ENCODE measurements at regions of chr16 and their contacts with region 1.

Region 1: GRCh38 chr16:20774703-20775362 is 11.0 kb downstream of the ACSM3 start:
- DNase-seq: peak; percentile 77
- H3K4me3 Mint-ChIP-seq: no peak overlapping the region
- H3K27ac Mint-ChIP-seq: no peak overlapping the region
- H3K4me1 Mint-ChIP-seq: no peaks in the 10 kb centered on the region
- H3K27me3 Mint-ChIP-seq: no peaks in the 10 kb centered on the region

Region 2: GRCh38 chr16:20763461-20764232 is 11.2 kb before region 1 on chr16 and contains the start of gene ACSM3:
- CTCF ChIA-PET with region 1: interaction called, 11 read pairs
- POLR2A ChIA-PET with region 1: no interaction called
- intact Hi-C with region 1: no loop called
- DNase-seq: peak; percentile 76
- H3K4me3 Mint-ChIP-seq: peak within 1 kb of the TSS; percentile 79
- H3K27ac Mint-ChIP-seq: peak within 1 kb of the TSS; percentile 87
- H3K4me1 Mint-ChIP-seq: peaks cover 20% of the 10 kb centered on the region
- H3K27me3 Mint-ChIP-seq: no peaks in the 10 kb centered on the region
- total RNA-seq, gene ACSM3: 13.8 to 17.4 TPM

Region 3: GRCh38 chr16:21116148-21116693 is 341.4 kb after region 1 on chr16:
- CTCF ChIA-PET with region 1: no interaction called
- POLR2A ChIA-PET with region 1: no interaction called
- intact Hi-C with region 1: no loop called
- DNase-seq: peak; percentile 20
- H3K4me3 Mint-ChIP-seq: peak overlapping the region; percentile 53
- H3K27ac Mint-ChIP-seq: no peak overlapping the region
- H3K4me1 Mint-ChIP-seq: peaks cover 7% of the 10 kb centered on the region
- H3K27me3 Mint-ChIP-seq: peaks cover 1% of the 10 kb centered on the region

Region 4: GRCh38 chr16:21226749-21227148 is 451.9 kb after region 1 on chr16:
- CTCF ChIA-PET with region 1: no interaction called
- POLR2A ChIA-PET with region 1: no interaction called
- intact Hi-C with region 1: no loop called
- DNase-seq: no peak
- H3K4me3 Mint-ChIP-seq: no peak overlapping the region
- H3K27ac Mint-ChIP-seq: no peak overlapping the region
- H3K4me1 Mint-ChIP-seq: peaks cover 6% of the 10 kb centered on the region
- H3K27me3 Mint-ChIP-seq: peaks cover 35% of the 10 kb centered on the region